ENCODE measurements at regions of chr9 and their contacts with region 1.

Region 1: DNA sequence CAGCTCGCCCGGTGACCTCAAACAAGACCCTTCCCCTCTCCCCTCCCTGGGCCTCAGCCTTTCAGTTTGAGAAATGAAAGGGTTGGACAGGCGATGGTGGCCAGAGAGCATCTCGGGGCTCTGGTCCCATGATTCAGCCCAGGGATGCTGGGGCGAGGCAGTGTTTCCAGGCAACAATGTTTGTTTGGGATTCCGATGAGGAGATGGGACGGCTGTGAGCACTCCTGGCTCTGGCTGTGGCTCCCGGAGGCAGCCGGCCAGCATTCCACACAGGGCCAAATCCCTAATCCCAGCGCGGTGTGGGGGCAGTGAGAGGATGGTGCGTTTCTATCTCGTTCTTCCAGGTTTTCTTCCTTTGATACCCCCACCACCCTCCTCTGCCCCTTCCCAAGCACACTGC is 66.0 kb downstream of the HMCN2 start:
- DNase-seq: peak; percentile 86
- ATAC-seq: peak; percentile 83

Region 2: DNA sequence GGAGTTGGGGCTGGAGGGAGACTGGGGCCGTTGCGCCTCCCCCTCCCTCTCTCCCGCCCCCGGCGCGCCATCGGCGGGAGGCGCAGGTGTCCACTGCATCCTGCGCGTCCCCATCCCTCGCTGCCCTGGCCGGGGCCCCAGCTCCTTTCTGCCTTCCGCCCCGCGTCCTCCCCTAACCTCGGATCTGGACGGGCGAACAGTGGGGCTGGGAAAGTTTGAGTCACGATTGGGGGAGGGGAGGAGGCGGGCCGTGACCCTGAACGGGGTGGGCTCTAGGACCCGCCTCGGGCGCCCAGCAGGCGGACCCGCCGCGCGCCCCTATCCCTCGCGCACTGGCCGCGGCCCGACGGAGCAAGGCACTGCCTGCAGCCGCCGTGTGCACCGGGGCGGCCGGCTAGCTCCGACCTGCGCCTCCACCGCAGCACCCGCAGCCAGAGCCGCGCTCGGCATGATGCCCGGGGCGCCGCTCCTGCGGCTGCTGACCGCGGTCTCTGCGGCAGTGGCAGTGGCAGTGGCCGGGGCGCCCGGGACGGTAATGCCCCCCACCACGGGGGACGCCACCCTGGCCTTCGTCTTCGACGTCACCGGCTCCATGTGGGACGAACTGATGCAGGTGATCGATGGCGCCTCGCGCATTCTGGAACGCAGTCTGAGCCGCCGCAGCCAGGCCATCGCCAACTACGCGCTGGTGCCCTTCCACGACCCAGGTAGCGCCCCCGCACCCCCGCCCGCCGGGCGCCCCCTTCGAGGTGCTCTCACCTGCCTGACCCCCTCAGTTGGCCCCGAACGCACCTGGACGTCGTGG is 65.9 kb before region 1 on chr9 and contains the start of gene HMCN2:
- intact Hi-C with region 1: loop called (anchors 5 kb)
- DNase-seq: peak; percentile 81
- ATAC-seq: peak; percentile 56
- total RNA-seq, gene HMCN2: 5.7 TPM

Region 3: GRCh38 chr9:130444565-130445221 is 113.1 kb after region 1 on chr9 and contains the start of gene ASS1:
- intact Hi-C with region 1: no loop called
- DNase-seq: peak; percentile 77
- ATAC-seq: peak; percentile 73
- total RNA-seq, gene ASS1: 84.8 TPM

Measured in Right ventricle myocardium inferior (tissue), 1 donor.